ENCODE measurements at regions of chr12 and their contacts with region 1.

Region 1: GRCh38 chr12:27573972-27574371 is 50.0 kb downstream of the PPFIBP1 start:
- DNase-seq: no peak

Region 2: GRCh38 chr12:27610374-27610773 is 36.4 kb after region 1 on chr12:
- intact Hi-C with region 1: no loop called
- DNase-seq: no peak

Region 3: GRCh38 chr12:27635349-27635972 is 61.5 kb after region 1 on chr12:
- intact Hi-C with region 1: loop called (anchors 10 kb)
- DNase-seq: no peak